Mammary epithelial cell (primary cell): ENCODE measurements at regions of chr12 and their contacts with region 1.

Region 1: GRCh38 chr12:124917135-124917840 is 2.8 kb upstream of the UBC start:
- DNase-seq: peak; percentile 100
- H3K4me3 ChIP-seq: peak overlapping the region; percentile 35 to 41 (median 36)
- H3K27ac ChIP-seq: peak overlapping the region; percentile 100
- H3K4me1 ChIP-seq: peaks cover 29% of the 10 kb centered on the region
- H3K27me3 ChIP-seq: no peaks in the 10 kb centered on the region
- CTCF ChIP-seq: no peak

Region 2: GRCh38 chr12:124869034-124869665 is 48.1 kb before region 1 on chr12:
- CTCF ChIA-PET with region 1: no interaction called
- dilution Hi-C with region 1: loop called (anchors 5 kb)
- in situ Hi-C with region 1: no loop called
- intact Hi-C with region 1: no loop called
- DNase-seq: peak; percentile 23
- H3K4me3 ChIP-seq: no peak overlapping the region
- H3K27ac ChIP-seq: no peak overlapping the region
- H3K4me1 ChIP-seq: peaks cover 3% of the 10 kb centered on the region
- H3K27me3 ChIP-seq: no peaks in the 10 kb centered on the region
- CTCF ChIP-seq: no peak

Region 3: DNA sequence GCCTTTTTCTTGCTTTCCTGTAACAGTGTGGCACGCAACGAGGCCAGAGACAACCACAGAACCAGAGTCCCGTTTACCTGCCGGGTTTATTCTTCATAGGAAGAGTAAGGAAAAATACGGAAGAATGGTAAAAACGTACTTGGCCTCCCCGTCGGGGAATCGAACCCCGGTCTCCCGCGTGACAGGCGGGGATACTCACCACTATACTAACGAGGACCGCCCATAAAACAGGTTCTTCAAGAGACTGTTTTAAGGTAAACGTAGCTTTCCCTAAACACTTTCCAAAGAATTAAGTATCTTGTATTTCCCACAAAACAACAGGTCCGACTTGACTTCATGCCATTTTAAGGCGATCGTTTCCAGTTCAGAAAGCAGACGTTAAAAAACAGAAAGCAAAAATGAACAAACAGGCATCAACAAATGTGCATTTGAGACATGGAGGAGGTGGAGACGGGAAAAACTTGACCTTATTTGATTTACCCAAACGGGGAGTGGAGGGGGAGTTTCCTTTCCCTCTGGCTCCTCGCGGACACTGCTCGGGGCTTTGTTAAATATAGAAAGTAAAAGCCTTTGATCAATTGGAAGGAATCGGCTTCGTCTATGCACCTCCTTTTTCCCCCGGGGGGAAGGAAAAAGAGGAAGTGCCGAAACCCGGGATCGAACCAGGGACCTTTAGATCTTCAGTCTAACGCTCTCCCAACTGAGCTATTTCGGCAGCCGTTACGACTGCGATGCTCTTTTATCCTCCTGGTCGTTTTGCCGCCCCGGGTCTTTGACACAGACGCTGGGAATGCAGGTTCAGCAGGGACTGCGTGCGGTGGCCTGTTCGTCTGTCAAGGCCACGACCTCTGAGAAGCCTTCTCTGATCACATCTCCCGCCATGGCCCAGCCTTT is 10.2 kb after region 1 on chr12:
- CTCF ChIA-PET with region 1: no interaction called
- dilution Hi-C with region 1: no loop called
- in situ Hi-C with region 1: no loop called
- intact Hi-C with region 1: loop called (anchors 1 kb)
- DNase-seq: peak; percentile 87
- H3K4me3 ChIP-seq: peak overlapping the region; percentile 59 to 83 (median 64)
- H3K27ac ChIP-seq: peak overlapping the region; percentile 96
- H3K4me1 ChIP-seq: peaks cover 26% of the 10 kb centered on the region
- H3K27me3 ChIP-seq: no peaks in the 10 kb centered on the region
- CTCF ChIP-seq: no peak

Region 4: DNA sequence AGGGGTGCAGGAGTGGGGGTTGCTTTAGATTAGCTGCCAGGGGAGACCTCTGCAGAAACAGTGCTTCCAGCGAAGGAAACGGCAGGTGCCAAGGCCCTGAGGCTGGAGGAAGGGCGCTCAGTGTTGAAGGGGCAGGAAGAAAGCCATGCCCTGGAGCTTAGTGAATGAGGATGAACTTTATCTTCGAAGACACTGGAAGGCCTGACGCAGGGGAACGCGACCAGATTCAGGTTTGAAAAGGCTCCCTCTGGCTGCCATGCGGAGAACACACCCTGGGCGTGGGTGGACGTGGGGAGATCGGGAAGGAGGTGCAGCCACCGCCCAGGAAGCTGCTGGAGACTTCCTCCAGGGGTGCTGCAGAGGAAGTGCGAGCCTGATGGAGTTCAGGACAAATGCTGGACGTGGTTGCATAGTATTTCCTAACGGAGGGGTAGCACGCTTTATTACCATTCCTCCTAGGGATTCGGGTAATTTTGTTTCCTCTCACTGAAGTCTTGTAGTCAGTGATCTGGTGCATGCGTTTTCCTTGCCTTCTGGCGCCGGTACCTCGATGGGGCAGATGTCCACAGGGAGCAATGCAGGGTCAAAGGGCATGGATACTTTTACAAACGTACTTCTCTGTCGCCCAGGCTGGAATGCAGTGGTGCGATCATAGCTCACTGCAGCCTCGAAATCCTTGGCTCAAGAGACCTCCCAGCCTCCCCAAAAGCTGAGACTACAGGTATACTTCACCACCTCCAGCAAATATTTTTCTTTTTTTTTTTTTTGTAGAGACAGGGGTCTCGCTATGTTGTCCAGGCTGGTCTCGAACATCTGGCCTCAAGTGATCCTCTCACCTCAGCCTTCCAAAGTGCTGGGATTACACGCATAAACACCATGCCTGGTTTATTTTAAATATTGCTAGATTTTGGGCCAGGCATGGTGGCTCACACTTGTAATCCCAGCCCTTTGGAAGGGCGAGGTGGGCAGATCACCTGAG is 23.6 kb after region 1 on chr12:
- CTCF ChIA-PET with region 1: interaction called, 5 read pairs
- dilution Hi-C with region 1: no loop called
- in situ Hi-C with region 1: no loop called
- intact Hi-C with region 1: loop called (anchors 1 kb)
- DNase-seq: peak; percentile 88
- H3K4me3 ChIP-seq: peak overlapping the region; percentile 4 to 58 (median 30)
- H3K27ac ChIP-seq: peak overlapping the region; percentile 37
- H3K4me1 ChIP-seq: peaks cover 33% of the 10 kb centered on the region
- H3K27me3 ChIP-seq: no peaks in the 10 kb centered on the region
- CTCF ChIP-seq: peak; percentile 95 to 97

Region 5: DNA sequence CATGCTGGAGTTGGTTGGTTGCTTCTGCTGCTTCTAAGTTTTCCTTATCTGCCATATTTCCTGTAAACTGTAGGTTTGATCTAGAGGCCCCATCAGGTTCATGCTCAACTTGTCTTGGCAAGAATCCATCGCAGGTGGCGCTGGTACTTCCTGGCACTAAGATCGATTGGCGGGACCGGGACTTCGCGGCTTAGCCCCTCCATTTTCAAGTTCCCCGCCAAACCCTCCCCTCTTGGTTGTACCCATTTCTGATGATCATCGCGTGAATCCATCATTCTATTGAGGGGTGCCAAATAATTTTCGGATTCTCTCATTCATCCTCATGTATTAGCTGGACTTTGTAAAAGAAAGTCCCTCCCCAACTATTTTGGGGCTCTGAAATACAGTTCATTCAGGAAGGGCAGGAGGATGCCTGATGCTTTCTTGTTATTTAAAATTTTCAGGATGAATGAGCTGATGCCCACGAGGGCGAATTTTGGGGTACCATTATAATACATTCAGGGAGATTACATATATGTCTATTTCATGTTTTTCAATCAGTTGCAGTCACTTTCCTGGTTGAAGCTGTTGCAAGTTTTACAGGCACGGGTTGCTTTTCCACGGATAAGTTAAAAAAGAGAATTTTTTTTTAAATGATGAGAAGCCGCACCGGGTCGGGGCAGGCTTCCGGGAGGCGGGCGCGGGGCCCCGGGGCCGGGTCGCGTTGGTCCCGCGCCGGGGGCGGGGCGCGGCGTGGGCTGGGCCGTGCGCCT is 75.8 kb after region 1 on chr12:
- CTCF ChIA-PET with region 1: no interaction called
- dilution Hi-C with region 1: no loop called
- in situ Hi-C with region 1: no loop called
- intact Hi-C with region 1: loop called (anchors 5 kb)
- DNase-seq: peak; percentile 68
- H3K4me3 ChIP-seq: peak overlapping the region; percentile 68 to 89 (median 79)
- H3K27ac ChIP-seq: peak overlapping the region; percentile 12
- H3K4me1 ChIP-seq: peaks cover 17% of the 10 kb centered on the region
- H3K27me3 ChIP-seq: no peaks in the 10 kb centered on the region
- CTCF ChIP-seq: peak; percentile 35 to 53

Region 6: GRCh38 chr12:125065021-125065795 is 147.9 kb after region 1 on chr12 and contains the start of gene AACS:
- CTCF ChIA-PET with region 1: no interaction called
- dilution Hi-C with region 1: no loop called
- in situ Hi-C with region 1: no loop called
- intact Hi-C with region 1: loop called (anchors 2 kb)
- DNase-seq: peak; percentile 75
- H3K4me3 ChIP-seq: peak within 1 kb of the TSS; percentile 69 to 84 (median 74)
- H3K27ac ChIP-seq: peak within 1 kb of the TSS; percentile 44
- H3K4me1 ChIP-seq: peaks cover 15% of the 10 kb centered on the region
- H3K27me3 ChIP-seq: no peaks in the 10 kb centered on the region
- CTCF ChIP-seq: peak in 1 of 2 donors; percentile 3
- total RNA-seq, gene AACS: 35.1 to 36.0 TPM

Region 7: GRCh38 chr12:125203145-125203765 is 286.0 kb after region 1 on chr12:
- CTCF ChIA-PET with region 1: no interaction called
- dilution Hi-C with region 1: no loop called
- in situ Hi-C with region 1: no loop called
- intact Hi-C with region 1: no loop called
- DNase-seq: no peak
- H3K4me3 ChIP-seq: no peak overlapping the region
- H3K27ac ChIP-seq: no peak overlapping the region
- H3K4me1 ChIP-seq: no peaks in the 10 kb centered on the region
- H3K27me3 ChIP-seq: no peaks in the 10 kb centered on the region
- CTCF ChIP-seq: peak; percentile 57 to 66